ENCODE measurements at regions of chr2 and their contacts with region 1.

Region 1: DNA sequence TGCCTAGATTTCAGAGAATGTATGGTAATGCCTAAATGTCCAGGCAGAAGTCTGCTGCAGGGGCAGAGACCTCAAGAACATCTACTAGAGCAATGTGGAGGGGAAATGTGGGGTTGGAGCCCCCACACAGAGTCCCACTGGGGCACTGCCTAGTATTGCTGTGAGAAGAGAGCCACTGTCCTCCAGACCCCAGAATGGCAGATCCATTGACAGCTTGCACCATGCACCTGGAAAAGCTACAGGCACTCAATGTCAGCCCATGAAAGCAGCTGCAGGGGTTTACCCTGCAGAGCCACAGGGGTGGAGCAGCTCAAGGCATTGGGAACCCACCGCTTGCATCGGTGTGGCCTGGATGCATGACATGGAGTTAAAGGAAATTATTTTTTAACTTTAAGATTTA is 314.1 kb downstream of the CYRIA start:
- DNase-seq: no peak
- ATAC-seq: no peak
- H3K4me3 ChIP-seq: no peak overlapping the region
- H3K27ac ChIP-seq: no peak overlapping the region
- H3K4me1 ChIP-seq: no peaks in the 10 kb centered on the region
- H3K27me3 ChIP-seq: no peaks in the 10 kb centered on the region
- CTCF ChIP-seq: no peak
- POLR2A ChIP-seq: no peak
- RAD21 ChIP-seq: no peak

Region 2: GRCh38 chr2:16142383-16143361 is 208.9 kb before region 1 on chr2:
- CTCF ChIA-PET with region 1: no interaction called
- POLR2A ChIA-PET with region 1: no interaction called
- dilution Hi-C with region 1: no loop called
- in situ Hi-C with region 1: no loop called
- intact Hi-C with region 1: loop called (anchors 10 kb)
- DNase-seq: no peak
- ATAC-seq: no peak
- H3K4me3 ChIP-seq: no peak overlapping the region
- H3K27ac ChIP-seq: no peak overlapping the region
- H3K4me1 ChIP-seq: no peaks in the 10 kb centered on the region
- H3K27me3 ChIP-seq: no peaks in the 10 kb centered on the region
- CTCF ChIP-seq: no peak
- POLR2A ChIP-seq: no peak
- RAD21 ChIP-seq: no peak